ENCODE measurements at regions of chr11 and their contacts with region 1.

Region 1: GRCh38 chr11:96242971-96243647 is 99.9 kb downstream of the MAML2 start:
- DNase-seq: no peak
- H3K4me3 ChIP-seq: no peak overlapping the region
- H3K27ac ChIP-seq: no peak overlapping the region
- H3K4me1 ChIP-seq: peaks cover 24% of the 10 kb centered on the region
- CTCF ChIP-seq: no peak

Region 2: DNA sequence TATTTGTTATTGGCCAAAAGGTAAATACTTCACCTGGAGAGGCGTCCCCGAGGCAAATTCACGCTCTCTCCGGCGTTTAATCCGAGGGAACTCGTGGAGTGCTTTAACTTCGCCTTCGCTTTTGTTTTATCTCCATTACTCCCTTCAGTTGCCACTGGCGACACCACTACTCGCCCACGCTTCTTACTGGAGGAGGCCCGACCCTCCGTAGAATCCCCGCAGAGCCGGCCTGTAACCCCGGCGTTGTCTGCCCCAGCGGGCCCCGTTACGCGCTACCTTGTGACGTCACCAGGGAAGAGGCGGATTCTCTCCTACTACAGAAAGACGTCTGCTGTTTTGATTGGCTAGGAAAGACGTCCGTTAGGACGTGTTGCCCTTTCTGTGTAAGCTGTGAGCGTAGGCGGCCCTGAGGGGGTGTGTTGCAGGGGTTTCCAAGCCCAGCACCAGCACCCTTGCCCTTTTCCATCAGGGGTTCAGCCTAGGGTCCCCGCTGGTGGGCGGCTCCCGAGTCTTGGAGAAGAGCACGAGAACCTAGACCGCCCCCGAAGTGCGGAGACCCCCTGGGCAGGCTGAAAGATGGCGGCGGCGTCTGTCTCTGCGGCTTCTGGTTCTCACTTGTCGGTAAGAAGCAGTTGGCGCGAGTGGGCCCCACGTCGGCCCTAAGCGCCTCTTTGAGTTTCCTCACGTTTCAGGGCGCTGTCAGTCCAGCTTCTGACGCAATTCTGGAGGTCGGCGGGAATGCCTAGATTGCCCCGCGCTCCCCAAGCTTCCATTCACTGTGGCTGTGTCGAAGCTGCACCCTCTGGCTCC is 452.8 kb before region 1 on chr11 and contains the start of gene CEP57:
- CTCF ChIA-PET with region 1: no interaction called
- POLR2A ChIA-PET with region 1: no interaction called
- intact Hi-C with region 1: loop called (anchors 10 kb)
- DNase-seq: peak; percentile 98
- H3K4me3 ChIP-seq: peak within 1 kb of the TSS; percentile 83
- H3K27ac ChIP-seq: peak within 1 kb of the TSS; percentile 94
- H3K4me1 ChIP-seq: peaks cover 28% of the 10 kb centered on the region
- CTCF ChIP-seq: no peak
- total RNA-seq, gene CEP57: 53.5 and 57.7 TPM in 2 replicates

Region 3: DNA sequence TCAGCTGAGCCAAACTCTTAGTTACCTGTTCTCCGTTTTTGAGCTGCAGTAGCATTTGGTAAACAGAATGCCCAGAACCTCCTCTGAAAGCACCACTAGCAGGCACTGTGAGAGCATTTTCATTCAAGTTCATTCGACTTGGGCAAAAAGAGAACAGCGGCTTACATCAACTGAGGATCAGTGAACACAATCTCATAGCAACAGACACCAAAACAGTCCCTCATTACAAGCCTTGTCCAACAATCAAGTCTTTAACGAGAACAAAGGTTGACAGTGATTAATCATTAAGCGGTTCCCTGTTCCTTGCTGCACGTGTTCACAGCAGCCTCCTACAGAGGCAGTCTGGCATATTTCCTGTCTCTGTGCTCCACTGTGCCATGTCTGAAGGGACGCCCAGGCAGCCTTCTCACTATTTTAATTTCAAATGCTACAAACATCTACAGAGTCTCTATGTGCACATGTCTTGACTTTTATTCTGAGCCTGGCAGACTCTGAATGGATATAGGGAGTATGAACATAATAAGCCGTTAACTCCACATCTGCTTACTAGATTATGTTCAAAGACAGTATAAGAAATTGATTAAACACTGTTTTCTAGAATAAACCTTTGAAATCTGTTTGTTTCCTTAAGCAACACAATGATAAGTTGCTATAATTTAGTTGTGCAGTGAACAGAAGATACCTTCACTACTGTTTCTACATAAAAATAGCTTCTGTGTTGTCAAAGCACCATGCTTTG is 230.9 kb before region 1 on chr11:
- CTCF ChIA-PET with region 1: no interaction called
- POLR2A ChIA-PET with region 1: no interaction called
- intact Hi-C with region 1: loop called (anchors 5 kb)
- DNase-seq: peak; percentile 88
- H3K4me3 ChIP-seq: peak overlapping the region; percentile 29
- H3K27ac ChIP-seq: peak overlapping the region; percentile 66
- H3K4me1 ChIP-seq: peaks cover 36% of the 10 kb centered on the region
- CTCF ChIP-seq: peak; percentile 86

Region 4: GRCh38 chr11:96054870-96055705 is 188.0 kb before region 1 on chr11:
- CTCF ChIA-PET with region 1: no interaction called
- POLR2A ChIA-PET with region 1: no interaction called
- intact Hi-C with region 1: loop called (anchors 1 kb)
- DNase-seq: peak; percentile 54
- H3K4me3 ChIP-seq: no peak overlapping the region
- H3K27ac ChIP-seq: no peak overlapping the region
- H3K4me1 ChIP-seq: no peaks in the 10 kb centered on the region
- CTCF ChIP-seq: peak; percentile 84

Region 5: GRCh38 chr11:96173422-96173821 is 69.7 kb before region 1 on chr11:
- CTCF ChIA-PET with region 1: no interaction called
- POLR2A ChIA-PET with region 1: no interaction called
- intact Hi-C with region 1: no loop called
- DNase-seq: no peak
- H3K4me3 ChIP-seq: no peak overlapping the region
- H3K27ac ChIP-seq: no peak overlapping the region
- H3K4me1 ChIP-seq: no peaks in the 10 kb centered on the region
- CTCF ChIP-seq: no peak

Region 6: GRCh38 chr11:96257972-96258934 is 15.1 kb after region 1 on chr11:
- CTCF ChIA-PET with region 1: interaction called, 5 read pairs
- POLR2A ChIA-PET with region 1: interaction called, 14 read pairs
- intact Hi-C with region 1: no loop called
- DNase-seq: peak; percentile 81
- H3K4me3 ChIP-seq: peak overlapping the region; percentile 43
- H3K27ac ChIP-seq: peak overlapping the region; percentile 81
- H3K4me1 ChIP-seq: peaks cover 71% of the 10 kb centered on the region
- CTCF ChIP-seq: no peak

Measured in OCI-LY7 (cell line).